Activated T-helper 1 cell treated with anti-CD3 and anti-CD28 coated beads, Interleukin-12 subunit alpha, Interleukin-12 subunit beta, Interleukin-2, Interleukin-4 antibody, amounts not matched to agents 30 ng/mL and 10 ng/mL and 1 ng/mL, durations not matched to agents 14 hours and 24 hours and 36 hours (primary cell): ENCODE measurements at regions of chrX and their contacts with region 1.

Region 1: DNA sequence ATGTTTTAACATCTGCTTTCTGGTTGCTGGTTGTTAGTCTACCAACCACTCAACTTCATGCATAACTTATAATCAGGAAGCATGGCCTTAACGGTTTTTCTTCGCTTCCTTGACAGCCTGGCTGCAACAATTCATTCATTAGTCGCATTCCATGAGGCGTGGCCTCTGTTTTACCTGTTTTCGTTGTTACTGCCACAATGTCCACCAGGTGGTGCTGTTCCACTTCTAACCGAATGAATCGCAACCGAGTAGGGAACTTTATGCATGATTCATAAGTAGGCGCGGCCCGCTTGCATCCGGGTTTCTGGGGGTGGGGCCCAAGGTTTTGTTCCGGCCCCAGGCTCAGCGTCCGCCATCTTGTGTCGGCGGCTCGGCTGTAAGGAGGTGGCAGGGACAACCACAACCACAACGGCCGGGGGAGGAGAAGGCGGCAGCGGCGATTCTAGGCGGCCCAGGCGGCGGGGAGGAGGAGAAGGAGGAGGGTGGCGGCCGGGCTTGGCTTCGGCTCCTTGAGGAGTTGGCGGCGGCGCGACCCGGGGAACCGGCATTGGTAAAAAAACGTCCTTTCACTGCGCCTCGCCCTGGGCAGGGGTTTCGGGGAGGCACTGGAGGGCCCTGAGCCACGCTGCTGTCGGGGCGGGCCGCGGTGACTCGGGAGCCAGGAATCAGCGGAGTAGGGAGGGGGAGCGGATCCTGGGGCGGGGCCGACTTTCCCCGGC is at the start of gene UBA1:
- DNase-seq: peak; percentile 87
- H3K4me3 Mint-ChIP-seq: peak within 1 kb of the TSS; percentile 96
- H3K27ac Mint-ChIP-seq: peak within 1 kb of the TSS; percentile 98
- H3K4me1 Mint-ChIP-seq: peaks cover 59% of the 10 kb centered on the region
- H3K27me3 Mint-ChIP-seq: no peaks in the 10 kb centered on the region
- total RNA-seq, gene UBA1: 221 and 223 TPM in 2 replicates

Region 2: GRCh38 chrX:47129157-47129898 is 64.3 kb before region 1 on chrX:
- intact Hi-C with region 1: loop called (anchors 5 kb)
- DNase-seq: peak; percentile 86
- H3K4me3 Mint-ChIP-seq: peak overlapping the region; percentile 97
- H3K27ac Mint-ChIP-seq: peak overlapping the region; percentile 98
- H3K4me1 Mint-ChIP-seq: no peaks in the 10 kb centered on the region
- H3K27me3 Mint-ChIP-seq: no peaks in the 10 kb centered on the region

Region 3: DNA sequence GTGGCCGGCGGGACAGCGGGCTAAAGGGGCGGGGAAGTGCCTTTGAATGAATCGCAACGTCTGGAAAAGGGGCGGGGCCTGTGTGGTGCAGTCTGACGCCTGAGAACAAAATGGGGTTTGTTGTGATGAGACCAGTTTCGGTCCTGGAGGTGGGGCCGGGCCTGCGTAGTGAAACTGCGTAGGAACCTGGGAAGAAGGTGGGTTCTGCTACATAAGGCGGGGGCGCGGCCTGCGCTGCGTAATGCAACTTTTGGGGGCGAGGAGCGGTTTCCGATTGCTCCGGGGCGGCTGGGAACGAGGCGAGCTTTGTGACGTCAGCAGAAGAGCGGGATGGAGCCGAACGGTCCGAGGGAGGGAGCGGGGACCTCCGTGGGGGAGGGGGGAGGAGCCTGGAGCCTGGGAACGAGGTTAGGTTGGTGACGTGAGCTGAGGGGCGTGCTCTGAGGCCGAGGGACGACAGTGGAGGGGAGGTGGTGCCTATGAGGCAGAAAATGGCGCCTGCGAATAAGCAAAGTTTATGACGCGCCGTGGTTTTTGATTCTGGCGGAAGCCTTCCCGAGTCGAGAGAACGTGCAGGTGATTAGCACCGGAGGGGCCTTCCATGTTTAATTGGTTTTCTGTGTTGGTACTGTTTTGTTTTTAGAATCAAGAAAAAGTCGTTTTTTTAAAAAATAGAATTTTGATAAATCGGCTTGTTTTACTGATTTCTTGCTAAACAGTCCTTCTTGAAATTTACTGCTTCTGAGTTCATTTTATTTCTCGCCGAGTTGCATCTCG is 39.9 kb after region 1 on chrX:
- intact Hi-C with region 1: loop called (anchors 1 kb)
- DNase-seq: peak; percentile 87
- H3K4me3 Mint-ChIP-seq: peak overlapping the region; percentile 87
- H3K27ac Mint-ChIP-seq: peak overlapping the region; percentile 90
- H3K4me1 Mint-ChIP-seq: peaks cover 19% of the 10 kb centered on the region
- H3K27me3 Mint-ChIP-seq: no peaks in the 10 kb centered on the region

Region 4: DNA sequence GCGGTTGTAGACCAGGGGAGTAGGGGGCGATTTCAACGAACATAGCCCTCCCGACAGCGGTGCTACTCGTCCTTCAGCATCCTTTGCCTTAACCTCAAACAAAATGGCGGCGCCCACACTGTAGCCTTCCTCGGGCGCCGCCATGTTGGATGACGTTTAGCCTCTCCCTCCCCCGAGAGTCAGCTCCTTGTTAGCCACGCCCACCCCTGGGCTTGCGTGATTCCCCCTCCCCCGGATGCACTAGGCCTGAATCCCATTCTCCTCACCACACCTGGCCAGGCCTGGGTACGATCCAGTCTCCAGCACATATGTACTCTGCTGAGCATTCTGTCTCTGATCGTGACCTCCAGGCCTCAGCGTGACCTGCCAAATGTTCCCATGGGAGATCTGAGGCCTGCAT is 127.8 kb after region 1 on chrX:
- intact Hi-C with region 1: no loop called
- DNase-seq: no peak
- H3K4me3 Mint-ChIP-seq: no peak overlapping the region
- H3K27ac Mint-ChIP-seq: no peak overlapping the region
- H3K4me1 Mint-ChIP-seq: no peaks in the 10 kb centered on the region
- H3K27me3 Mint-ChIP-seq: no peaks in the 10 kb centered on the region

Region 5: DNA sequence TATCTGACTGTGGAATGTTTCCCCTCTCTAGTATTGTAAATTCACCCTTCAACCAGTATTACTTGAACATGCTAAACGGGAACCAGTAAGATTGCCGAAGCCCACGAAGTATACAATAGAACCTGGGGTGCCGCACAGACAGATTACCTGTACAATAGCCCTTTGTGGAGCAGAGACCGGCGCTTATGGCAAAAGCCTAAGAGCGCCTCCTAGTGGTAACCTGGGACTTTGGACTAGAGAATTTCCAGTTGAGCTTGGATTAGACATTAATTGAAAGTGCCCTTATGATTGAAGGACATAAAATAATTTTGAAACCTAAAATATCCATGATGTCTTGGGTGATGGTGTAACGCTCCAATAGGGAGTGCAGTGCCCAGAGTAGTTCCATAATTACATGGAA is 190.9 kb after region 1 on chrX:
- intact Hi-C with region 1: loop called (anchors 1 kb)
- DNase-seq: peak; percentile 48
- H3K4me3 Mint-ChIP-seq: no peak overlapping the region
- H3K27ac Mint-ChIP-seq: no peak overlapping the region
- H3K4me1 Mint-ChIP-seq: peaks cover 12% of the 10 kb centered on the region
- H3K27me3 Mint-ChIP-seq: no peaks in the 10 kb centered on the region

Region 6: GRCh38 chrX:47560831-47561652 is 367.4 kb after region 1 on chrX and contains the start of gene ARAF:
- intact Hi-C with region 1: loop called (anchors 1 kb)
- DNase-seq: peak; percentile 93
- H3K4me3 Mint-ChIP-seq: peak within 1 kb of the TSS; percentile 92
- H3K27ac Mint-ChIP-seq: peak within 1 kb of the TSS; percentile 99
- H3K4me1 Mint-ChIP-seq: peaks cover 40% of the 10 kb centered on the region
- H3K27me3 Mint-ChIP-seq: no peaks in the 10 kb centered on the region
- total RNA-seq, gene ARAF: 75.9 and 84.4 TPM in 2 replicates

Region 7: DNA sequence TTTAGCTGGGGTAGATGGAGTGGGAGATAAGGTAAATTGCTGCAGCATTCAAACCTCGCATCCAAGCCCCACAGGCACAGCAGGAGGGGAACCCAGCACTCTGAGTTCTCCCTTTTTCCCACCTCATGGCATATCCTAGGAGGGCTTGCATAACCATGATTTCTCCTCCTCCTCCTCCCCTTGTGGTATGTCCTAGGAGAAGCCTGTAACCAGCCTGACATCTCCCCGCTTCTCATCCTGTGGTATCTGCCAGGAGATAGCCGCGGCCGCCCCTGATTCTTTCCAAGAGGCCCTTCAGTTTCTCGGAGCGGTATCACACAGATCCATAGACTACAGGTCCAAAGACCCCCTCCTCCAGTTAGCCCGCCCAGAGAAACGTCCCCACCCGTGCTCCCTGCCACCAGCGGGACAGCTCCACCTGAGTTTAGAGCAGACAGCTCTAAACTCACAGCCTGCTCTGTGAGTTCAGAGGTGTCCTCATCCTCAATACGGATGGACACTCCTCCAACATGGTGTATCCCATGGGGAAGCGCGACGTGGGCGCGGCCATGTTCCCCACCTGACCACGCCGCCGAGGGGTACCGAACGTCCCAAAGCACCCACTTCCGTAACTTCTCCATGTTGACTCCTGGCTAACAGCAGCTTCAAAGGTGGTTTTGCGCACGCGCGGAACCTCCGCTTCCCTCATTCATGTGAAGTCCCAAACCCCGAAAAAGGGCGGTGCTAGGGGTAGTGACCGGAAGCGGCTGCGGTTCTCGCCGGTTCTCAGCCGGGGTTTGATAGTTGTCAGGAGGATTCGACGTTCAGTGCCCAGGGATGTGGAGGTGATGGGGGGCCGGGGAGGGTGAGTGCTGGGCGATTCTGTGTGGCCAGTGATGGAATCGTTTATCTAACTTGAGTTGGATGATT is 642.8 kb after region 1 on chrX and contains the start of gene ZNF81:
- intact Hi-C with region 1: loop called (anchors 10 kb)
- DNase-seq: peak; percentile 87
- H3K4me3 Mint-ChIP-seq: peak within 1 kb of the TSS; percentile 98
- H3K27ac Mint-ChIP-seq: peak within 1 kb of the TSS; percentile 97
- H3K4me1 Mint-ChIP-seq: peaks cover 13% of the 10 kb centered on the region
- H3K27me3 Mint-ChIP-seq: no peaks in the 10 kb centered on the region
- total RNA-seq, gene ZNF81: 5.9 and 9.2 TPM in 2 replicates

Region 8: DNA sequence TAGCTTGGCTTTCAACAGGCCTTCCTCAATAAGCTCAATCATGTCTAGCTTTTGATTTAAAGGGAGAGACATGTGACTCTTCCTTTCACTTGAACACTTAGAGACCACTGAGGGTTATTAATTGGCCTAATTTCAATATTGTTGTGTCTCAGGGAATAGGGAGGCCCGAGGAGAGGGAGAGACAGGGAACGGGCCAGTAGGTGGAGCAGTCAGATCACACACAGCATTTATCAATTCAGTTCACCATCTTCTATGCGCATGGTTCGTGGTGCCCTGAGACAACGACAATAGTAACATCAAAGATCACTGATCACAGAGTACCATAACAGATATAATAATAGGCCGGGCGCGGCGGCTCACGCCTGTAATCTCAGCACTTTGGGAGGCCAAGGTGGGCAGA is 660.8 kb after region 1 on chrX:
- intact Hi-C with region 1: no loop called
- DNase-seq: no peak
- H3K4me3 Mint-ChIP-seq: no peak overlapping the region
- H3K27ac Mint-ChIP-seq: no peak overlapping the region
- H3K4me1 Mint-ChIP-seq: peaks cover 6% of the 10 kb centered on the region
- H3K27me3 Mint-ChIP-seq: no peaks in the 10 kb centered on the region